ENCODE measurements at regions of chr19 and their contacts with region 1.

Region 1: DNA sequence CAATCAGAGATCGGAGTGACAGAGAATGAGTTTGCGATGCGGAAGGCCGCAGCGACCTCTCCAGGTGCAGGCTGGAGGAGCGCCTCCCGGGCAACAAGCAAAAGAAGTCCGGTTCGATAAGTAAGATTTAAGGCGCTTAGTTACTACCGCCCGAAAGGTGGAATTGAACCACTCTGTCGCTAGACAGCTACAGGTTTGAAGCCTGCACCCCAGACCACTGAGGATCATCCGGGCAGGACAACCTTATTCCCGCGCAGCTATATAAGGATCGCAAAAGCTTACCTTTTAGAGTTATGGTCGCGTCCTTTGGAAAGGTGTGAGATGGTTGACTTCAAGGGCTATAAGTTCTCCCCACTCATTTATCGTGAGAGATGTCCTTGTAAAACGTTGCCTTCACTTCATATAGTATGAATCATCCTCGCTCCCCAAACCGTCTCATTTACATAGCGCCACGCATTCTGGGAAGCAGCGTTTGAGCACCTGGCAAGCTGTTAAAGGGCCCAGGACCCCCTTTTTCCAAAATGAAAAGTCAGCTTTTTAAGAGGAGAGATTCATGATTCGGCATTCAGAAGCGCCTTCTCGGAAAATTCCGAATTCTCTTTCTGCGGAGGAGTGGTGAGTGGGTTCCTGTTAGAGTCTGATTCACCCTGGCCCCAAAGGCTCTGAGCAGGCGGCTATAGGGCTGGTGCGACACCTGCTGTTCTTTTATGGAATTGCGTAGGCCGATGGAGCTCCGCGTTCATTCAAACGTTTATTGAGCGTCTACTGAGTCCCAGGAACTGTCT is 10.8 kb downstream of the FOSB start:
- DNase-seq: peak; percentile 73 to 96 (median 88)
- ATAC-seq: peak; percentile 50 to 70
- H3K4me3 Mint-ChIP-seq: peak overlapping the region; percentile 67 to 95 (median 90)
- H3K27ac Mint-ChIP-seq: peak overlapping the region; percentile 97 to 100 (median 98)
- H3K4me1 Mint-ChIP-seq: peaks cover 16 to 57% (median 42%) of the 10 kb centered on the region in 4 donors
- H3K27me3 Mint-ChIP-seq: peaks cover 0 to 19% (median 0%) of the 10 kb centered on the region in 5 donors

Region 2: DNA sequence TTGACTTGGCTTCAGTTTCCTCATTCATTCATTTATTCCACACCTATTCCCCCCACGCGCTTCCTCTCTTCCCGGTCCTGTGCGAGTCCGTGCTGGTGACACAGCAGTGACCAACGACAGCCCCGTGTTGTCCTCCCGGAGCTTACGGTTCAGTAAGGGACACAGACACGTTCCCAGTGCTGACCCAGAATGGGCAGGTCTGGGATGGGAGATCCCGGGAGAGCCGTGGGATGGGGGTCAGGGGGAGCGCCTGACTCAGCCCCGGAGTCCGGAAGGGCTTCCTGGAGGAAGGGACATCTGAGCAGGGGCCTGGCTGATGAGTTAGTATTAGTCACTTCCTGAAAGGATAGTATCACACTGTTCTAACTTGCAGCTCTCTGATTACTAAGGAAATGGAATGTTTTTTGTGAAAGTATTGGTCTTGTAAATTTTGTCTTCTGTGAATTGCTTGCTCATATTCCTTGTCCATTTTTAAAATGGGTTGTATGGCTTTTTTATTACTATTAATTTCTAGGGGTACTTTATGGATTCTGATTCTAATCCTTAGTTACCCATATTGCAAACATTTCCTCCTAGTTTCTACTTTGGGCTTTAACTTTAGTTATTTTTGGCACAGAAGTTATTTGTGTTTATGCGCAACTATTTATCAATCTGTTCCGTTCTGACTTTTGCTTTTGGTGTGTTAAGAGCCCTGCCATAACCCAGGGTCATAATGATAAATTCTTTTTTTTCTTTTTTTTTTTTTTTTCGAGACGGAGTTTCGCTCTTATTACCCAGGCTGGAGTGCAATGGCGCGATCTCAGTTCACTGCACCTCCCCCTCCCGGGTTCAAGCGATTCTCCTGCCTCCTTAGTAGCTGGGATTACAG is 54.2 kb before region 1 on chr19:
- POLR2A ChIA-PET with region 1: interaction called, 16 read pairs
- DNase-seq: peak in 1 of 10 donors; percentile 33
- ATAC-seq: no peak
- H3K4me3 Mint-ChIP-seq: peak overlapping the region; percentile 89 to 99 (median 95)
- H3K27ac Mint-ChIP-seq: peak overlapping the region; percentile 86 to 96 (median 94)
- H3K4me1 Mint-ChIP-seq: peaks cover 25 to 54% (median 50%) of the 10 kb centered on the region in 4 donors
- H3K27me3 Mint-ChIP-seq: peaks cover 0 to 2% (median 0%) of the 10 kb centered on the region in 5 donors

Region 3: DNA sequence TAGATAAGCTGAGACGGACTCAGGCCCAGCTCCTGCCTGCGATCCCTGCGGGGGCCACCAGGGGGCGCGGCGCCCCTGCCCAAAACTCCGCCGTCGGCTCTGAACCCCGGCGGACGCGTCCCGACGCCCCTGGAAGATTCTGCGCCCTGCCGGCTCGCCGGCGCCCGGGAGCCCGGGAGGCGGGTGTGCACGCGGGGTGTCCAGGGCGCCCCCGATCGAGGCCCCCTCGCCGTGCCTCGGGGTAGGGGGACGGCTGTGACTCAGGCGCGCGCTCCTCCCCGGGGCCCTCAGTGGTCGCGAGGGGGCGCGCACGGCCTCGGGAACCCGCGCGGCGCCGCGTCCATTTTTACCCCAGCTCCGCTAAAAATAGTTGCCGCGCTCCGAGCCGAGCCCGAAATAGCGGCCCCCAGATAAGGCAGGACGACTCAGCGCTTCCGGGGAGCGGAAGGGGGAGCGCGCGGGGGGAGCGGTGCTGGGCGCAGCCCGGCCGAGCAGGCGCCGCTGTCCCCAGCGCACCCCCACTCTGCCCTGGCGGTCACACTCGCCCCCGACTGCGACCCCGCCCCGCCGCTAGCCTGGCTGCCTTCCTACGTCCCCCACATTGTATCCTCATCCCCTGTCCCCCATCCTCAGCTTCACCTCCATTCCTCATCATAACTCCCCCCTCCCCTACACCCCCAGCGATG is 38.9 kb before region 1 on chr19:
- POLR2A ChIA-PET with region 1: interaction called, 133 read pairs
- DNase-seq: peak; percentile 73 to 97 (median 86)
- ATAC-seq: peak; percentile 59 to 66
- H3K4me3 Mint-ChIP-seq: peak overlapping the region; percentile 58 to 84 (median 76)
- H3K27ac Mint-ChIP-seq: peak overlapping the region in 6 of 10 donors; percentile 81 to 91 (median 89)
- H3K4me1 Mint-ChIP-seq: peaks cover 18 to 40% (median 35%) of the 10 kb centered on the region in 4 donors
- H3K27me3 Mint-ChIP-seq: no peaks in the 10 kb centered on the region

Region 4: DNA sequence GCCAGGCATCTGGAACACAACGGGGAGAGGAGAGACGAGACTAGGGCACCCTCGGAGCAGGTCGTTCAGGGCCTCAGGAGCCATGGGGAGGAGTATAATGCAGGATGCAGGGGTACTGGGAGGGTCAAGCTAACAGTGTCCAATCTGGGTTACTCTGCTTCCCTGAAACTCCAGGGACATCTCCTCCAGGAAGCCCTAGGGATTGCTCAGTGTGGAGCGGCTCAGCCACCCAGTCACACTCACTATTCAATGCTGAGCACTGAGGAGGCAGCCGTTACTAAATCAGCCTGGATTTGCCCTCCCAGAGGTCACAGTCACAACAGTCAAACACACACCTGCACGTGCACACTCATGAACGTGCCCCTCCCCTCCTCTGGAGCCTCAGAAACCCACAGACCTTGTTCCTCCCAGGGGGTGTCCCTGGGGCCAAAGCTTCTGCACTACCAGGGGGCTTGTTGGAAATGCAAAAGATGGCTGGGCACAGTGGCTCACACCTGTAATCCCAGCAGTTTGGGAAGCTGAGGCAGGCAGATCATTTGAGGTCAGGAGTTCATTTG is 17.8 kb before region 1 on chr19:
- POLR2A ChIA-PET with region 1: no interaction called
- DNase-seq: no peak
- ATAC-seq: no peak
- H3K4me3 Mint-ChIP-seq: no peak overlapping the region
- H3K27ac Mint-ChIP-seq: peak overlapping the region in 2 of 10 donors; percentile 51 to 66
- H3K4me1 Mint-ChIP-seq: peaks cover 7 to 25% (median 8%) of the 10 kb centered on the region in 4 donors
- H3K27me3 Mint-ChIP-seq: peaks cover 0 to 10% (median 8%) of the 10 kb centered on the region in 5 donors

Region 5: DNA sequence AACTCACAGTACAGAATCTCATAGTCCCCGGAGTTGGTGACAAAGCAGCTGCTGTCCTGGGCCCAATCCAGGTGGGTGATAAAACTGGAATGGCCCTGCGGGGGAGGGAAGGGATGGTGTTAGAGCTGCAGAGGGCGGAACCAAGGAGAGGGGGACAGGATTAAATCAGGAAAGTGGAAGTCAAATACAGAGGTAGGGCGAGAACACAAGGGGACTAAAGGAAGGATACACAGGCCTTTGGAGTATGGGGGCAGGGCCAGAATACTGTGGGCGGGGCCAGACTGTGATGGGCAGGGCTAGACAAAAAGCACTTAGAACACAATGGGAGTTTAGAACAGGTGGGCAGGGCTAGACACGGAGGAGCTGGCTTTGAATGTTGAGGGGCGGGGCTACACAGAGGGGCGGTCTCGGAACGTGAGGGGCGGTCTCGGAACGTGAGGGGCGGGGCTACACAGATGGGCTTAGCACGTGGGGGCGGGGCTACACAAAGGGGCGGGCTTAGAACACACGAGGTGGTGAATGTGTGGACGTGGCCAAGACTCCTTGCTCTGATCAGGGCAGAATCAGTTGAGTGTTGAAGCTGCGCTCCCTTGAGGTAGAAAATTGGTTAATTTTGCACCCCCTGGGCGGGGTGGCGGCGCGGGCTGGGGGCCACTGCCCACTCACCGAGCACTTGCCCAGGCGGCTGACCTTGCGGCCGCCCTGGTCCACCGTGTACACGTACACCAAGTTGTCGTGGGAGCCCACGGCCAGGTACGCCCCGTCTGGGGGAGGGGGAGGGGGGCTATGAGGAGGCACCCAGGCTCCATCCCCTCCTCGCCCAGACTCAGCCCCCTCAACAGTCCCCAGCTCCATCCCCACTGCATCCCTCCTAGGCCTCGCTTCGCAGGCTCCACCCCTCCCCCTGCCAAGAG is 137.4 kb after region 1 on chr19:
- POLR2A ChIA-PET with region 1: no interaction called
- DNase-seq: peak; percentile 39 to 67 (median 60)
- ATAC-seq: peak; percentile 88 to 98
- H3K4me3 Mint-ChIP-seq: no peak overlapping the region
- H3K27ac Mint-ChIP-seq: peak overlapping the region in 6 of 10 donors; percentile 12 to 74 (median 44)
- H3K4me1 Mint-ChIP-seq: peaks cover 0 to 8% (median 2%) of the 10 kb centered on the region in 4 donors
- H3K27me3 Mint-ChIP-seq: no peaks in the 10 kb centered on the region

Measured in naive thymus-derived CD8-positive, alpha-beta T cell (primary cell).